ENCODE measurements at regions of chr2 and their contacts with region 1.

Region 1: GRCh38 chr2:35871672-35872071 is 483.9 kb upstream of the CRIM1 start:
- DNase-seq: no peak
- H3K4me3 ChIP-seq: no peak overlapping the region
- H3K27ac ChIP-seq: no peak overlapping the region
- H3K4me1 ChIP-seq: no peaks in the 10 kb centered on the region
- H3K27me3 ChIP-seq: no peaks in the 10 kb centered on the region
- CTCF ChIP-seq: no peak
- POLR2A ChIP-seq: no peak

Region 2: DNA sequence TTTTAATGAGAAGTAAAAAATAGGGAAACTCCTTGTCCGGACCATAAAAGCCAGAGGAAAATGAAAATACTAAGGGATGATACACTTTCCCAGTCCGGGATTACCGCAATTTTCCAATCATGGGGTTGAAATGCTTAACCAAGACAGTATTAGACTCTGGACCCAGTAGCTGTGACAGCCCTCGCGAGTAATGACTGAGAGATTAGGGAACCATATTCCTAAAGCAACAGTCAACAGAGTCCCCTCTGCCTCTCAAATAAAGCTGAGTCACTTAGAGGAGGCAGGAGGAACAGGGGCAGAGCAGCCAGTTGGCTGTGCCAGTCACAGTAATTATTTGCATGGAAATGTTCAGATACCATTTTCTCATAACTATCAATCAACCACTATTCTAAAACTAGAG is 1247.5 kb after region 1 on chr2:
- intact Hi-C with region 1: loop called (anchors 10 kb)
- DNase-seq: no peak
- H3K4me3 ChIP-seq: no peak overlapping the region
- H3K27ac ChIP-seq: no peak overlapping the region
- H3K4me1 ChIP-seq: no peaks in the 10 kb centered on the region
- H3K27me3 ChIP-seq: no peaks in the 10 kb centered on the region
- CTCF ChIP-seq: no peak
- POLR2A ChIP-seq: no peak